ENCODE measurements at regions of chr2 and their contacts with region 1.

Region 1: DNA sequence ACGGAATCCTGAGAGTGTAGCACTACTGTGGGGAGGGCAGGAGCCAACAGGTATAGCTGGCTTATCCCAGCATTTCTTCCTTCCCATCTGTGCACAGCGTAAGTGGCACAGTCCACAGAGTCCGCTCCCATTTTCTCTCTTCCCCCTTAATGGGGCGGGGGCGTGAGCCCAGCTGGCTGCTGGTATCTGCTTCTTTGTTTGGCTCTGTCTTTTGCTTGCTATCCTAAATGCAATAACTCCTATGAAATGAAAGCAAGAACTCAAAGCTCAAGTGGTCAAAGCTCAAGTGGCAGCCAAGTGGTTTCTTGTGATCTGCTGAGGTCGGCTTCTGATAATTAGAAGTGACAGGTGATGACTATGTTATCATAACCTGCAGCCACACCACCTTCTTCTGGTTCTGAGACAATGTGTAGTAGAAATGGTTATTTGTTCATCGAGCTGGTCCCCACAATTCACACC is 192.7 kb downstream of the PLCL1 start:
- DNase-seq: no peak
- H3K4me3 ChIP-seq: no peak overlapping the region
- H3K27ac ChIP-seq: no peak overlapping the region
- H3K4me1 ChIP-seq: no peaks in the 10 kb centered on the region
- H3K27me3 ChIP-seq: no peaks in the 10 kb centered on the region
- CTCF ChIP-seq: no peak

Region 2: GRCh38 chr2:197633109-197633657 is 363.9 kb before region 1 on chr2:
- CTCF ChIA-PET with region 1: no interaction called
- POLR2A ChIA-PET with region 1: no interaction called
- intact Hi-C with region 1: loop called (anchors 5 kb)
- DNase-seq: no peak
- H3K4me3 ChIP-seq: no peak overlapping the region
- H3K27ac ChIP-seq: no peak overlapping the region
- H3K4me1 ChIP-seq: no peaks in the 10 kb centered on the region
- H3K27me3 ChIP-seq: no peaks in the 10 kb centered on the region
- CTCF ChIP-seq: no peak